Activated CD4-positive, alpha-beta memory T cell treated with anti-CD3 and anti-CD28 coated beads for 36 hours (primary cell): ENCODE measurements at regions of chr2 and their contacts with region 1.

Region 1: DNA sequence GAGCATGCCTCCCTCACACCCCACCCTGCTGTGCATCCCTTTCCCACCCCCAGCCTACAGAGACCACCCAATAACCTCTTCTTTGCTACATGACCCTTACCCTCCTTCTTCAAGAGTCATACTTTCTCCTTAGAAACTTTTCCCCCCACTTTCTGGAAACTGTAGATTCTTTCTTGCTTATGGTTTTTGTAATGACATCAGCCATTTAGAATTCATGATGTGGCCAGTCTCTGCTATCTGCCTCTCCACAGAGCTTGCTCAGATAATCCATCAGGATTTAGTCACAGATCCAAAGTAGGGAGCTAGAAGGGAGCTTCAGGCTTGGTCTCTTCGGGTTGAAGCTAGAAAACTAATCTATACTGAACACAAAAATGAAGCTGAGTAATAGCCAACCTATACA is 36.5 kb downstream of the GALM start:
- DNase-seq: no peak
- H3K4me3 Mint-ChIP-seq: peak overlapping the region; percentile 34
- H3K27ac Mint-ChIP-seq: peak overlapping the region; percentile 97
- H3K4me1 Mint-ChIP-seq: peaks cover 71% of the 10 kb centered on the region
- H3K27me3 Mint-ChIP-seq: no peaks in the 10 kb centered on the region

Region 2: GRCh38 chr2:38682008-38682575 is 20.3 kb before region 1 on chr2:
- CTCF ChIA-PET with region 1: interaction called, 5 read pairs
- POLR2A ChIA-PET with region 1: interaction called, 11 read pairs
- intact Hi-C with region 1: loop called (anchors 2 kb)
- DNase-seq: peak; percentile 38
- H3K4me3 Mint-ChIP-seq: peak overlapping the region; percentile 63
- H3K27ac Mint-ChIP-seq: peak overlapping the region; percentile 84
- H3K4me1 Mint-ChIP-seq: peaks cover 78% of the 10 kb centered on the region
- H3K27me3 Mint-ChIP-seq: no peaks in the 10 kb centered on the region

Region 3: DNA sequence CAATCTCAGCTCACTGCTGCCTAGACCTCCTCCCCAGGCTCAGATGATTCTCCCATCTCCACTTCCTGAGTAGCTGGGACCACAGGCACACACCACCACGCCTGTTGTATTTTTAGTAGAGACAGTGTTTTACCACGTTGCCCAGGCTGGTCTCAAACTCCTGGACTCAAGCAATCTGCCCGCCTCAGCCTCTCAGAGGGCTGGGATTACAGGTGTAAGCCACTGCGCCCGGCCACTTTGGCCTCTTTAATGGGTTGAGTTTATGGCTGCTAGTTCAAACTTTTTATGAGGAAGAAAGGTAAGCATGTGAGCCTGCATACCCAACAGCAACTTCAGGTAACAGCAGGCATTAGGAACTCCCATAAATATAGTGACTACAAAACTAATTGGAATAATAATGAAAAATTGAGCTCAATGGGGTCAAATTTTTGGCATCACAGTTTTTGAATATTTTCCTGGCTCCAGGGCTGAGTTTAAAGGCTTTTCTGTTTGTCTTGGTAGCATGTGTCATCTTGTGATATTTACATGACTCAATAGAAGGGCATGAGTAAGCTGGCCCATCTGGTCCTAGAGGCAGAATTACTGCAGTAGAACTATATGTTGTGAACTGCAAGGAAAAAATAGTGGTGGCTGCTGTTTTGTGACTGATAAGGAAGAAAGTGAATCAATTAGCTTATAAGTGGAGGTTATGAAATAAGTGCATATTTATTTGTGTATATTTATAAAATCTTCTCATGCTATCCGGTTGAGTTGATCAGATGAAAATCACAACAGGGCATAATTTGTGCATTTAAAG is 11.7 kb before region 1 on chr2:
- CTCF ChIA-PET with region 1: no interaction called
- POLR2A ChIA-PET with region 1: interaction called, 3 read pairs
- intact Hi-C with region 1: loop called (anchors 1 kb)
- DNase-seq: peak; percentile 50
- H3K4me3 Mint-ChIP-seq: no peak overlapping the region
- H3K27ac Mint-ChIP-seq: peak overlapping the region; percentile 88
- H3K4me1 Mint-ChIP-seq: peaks cover 78% of the 10 kb centered on the region
- H3K27me3 Mint-ChIP-seq: no peaks in the 10 kb centered on the region